Natural killer cell (primary cell): ENCODE measurements at regions of chr16 and their contacts with region 1.

Region 1: GRCh38 chr16:4548124-4548523 is 8.0 kb upstream of the C16orf96 start:
- DNase-seq: no peak
- ATAC-seq: no peak
- H3K4me3 ChIP-seq: no peak overlapping the region
- H3K4me3 Mint-ChIP-seq: no peak overlapping the region
- H3K27ac ChIP-seq: no peak overlapping the region
- H3K27ac Mint-ChIP-seq: no peak overlapping the region
- H3K4me1 ChIP-seq: peaks cover 8% of the 10 kb centered on the region
- H3K4me1 Mint-ChIP-seq: peaks cover 0 to 4% of the 10 kb centered on the region in 2 donors
- H3K27me3 ChIP-seq: no peaks in the 10 kb centered on the region
- H3K27me3 Mint-ChIP-seq: no peaks in the 10 kb centered on the region
- CTCF ChIP-seq: no peak

Region 2: DNA sequence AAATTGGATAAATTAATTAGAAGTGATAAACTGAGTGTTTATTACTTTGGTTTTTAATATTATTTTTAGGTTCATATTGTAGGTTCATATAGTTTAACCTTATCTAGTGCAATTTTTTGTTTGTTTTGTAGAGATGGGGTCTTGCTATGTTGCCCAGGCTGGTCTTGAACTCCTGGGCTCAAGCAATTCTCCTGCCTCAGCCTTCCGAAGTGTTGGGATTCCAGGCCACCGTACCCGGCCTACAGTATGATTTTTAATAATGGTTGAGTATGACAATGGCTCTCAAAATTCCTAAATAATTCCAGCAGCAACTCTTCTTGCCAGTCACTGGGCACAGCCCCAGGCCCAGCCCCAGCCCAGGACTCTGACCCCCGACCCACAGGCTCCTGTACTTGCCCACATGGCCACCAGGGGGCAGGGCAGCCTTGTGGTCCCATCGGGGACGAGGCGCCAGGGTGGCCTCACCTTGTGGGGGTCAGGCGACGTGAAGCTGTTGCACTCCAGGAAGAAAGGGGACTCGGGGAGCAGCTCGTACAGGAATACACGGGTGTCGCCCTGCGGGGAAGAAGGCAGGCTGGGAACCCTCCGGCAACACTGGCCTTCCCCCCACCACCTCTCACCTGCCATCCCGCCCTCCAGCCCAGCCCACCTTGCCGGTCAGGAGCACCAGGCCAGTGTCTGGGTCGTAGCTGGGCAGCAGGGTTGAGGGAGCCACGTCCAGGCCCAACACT is 189.1 kb before region 1 on chr16:
- intact Hi-C with region 1: loop called (anchors 2 kb)
- DNase-seq: peak; percentile 67 to 80
- ATAC-seq: peak; percentile 75 to 85 (median 77)
- H3K4me3 ChIP-seq: no peak overlapping the region
- H3K4me3 Mint-ChIP-seq: peak overlapping the region; percentile 13
- H3K27ac ChIP-seq: no peak overlapping the region
- H3K27ac Mint-ChIP-seq: peak overlapping the region; percentile 50 to 61
- H3K4me1 ChIP-seq: peaks cover 8% of the 10 kb centered on the region
- H3K4me1 Mint-ChIP-seq: peaks cover 0 to 7% of the 10 kb centered on the region in 2 donors
- H3K27me3 ChIP-seq: no peaks in the 10 kb centered on the region
- H3K27me3 Mint-ChIP-seq: no peaks in the 10 kb centered on the region
- CTCF ChIP-seq: peak; percentile 83